ENCODE measurements at regions of chr9 and their contacts with region 1.

Region 1: DNA sequence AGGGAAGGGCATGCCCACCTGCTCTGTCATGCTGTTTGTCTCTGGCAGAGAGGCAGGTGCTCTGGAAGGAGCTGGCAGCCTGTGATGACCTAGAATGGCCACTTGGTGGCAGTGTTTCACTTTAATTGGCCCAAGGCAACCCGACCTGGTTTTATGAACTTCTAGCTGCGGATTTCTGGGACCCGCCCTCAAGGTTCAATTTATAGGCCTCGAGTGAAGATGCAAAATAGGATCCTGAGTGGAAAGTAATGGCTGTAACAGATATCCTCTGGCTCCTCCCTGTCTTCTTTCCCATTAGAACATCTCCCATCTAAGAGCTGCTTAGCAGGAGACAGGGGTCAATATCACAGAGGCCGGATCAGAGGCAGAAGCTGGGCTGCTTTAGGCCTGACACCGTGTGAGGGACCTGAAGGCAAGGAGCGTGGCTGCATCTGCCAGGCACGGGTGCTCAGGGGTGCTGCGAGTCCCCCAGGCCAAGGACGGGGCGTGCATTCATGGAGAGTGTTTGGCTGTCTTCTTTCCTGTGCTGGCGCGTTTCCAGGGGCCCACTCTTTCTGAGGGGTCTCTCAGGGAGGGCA is 56.7 kb upstream of the SLC28A3 start:
- DNase-seq: peak; percentile 9 to 37
- ATAC-seq: peak; percentile 36 to 77
- H3K4me3 ChIP-seq: no peak overlapping the region
- H3K27ac ChIP-seq: no peak overlapping the region
- H3K4me1 ChIP-seq: no peaks in the 10 kb centered on the region
- H3K27me3 ChIP-seq: no peaks in the 10 kb centered on the region
- CTCF ChIP-seq: peak; percentile 66 to 92 (median 75)
- POLR2A ChIP-seq: no peak

Region 2: DNA sequence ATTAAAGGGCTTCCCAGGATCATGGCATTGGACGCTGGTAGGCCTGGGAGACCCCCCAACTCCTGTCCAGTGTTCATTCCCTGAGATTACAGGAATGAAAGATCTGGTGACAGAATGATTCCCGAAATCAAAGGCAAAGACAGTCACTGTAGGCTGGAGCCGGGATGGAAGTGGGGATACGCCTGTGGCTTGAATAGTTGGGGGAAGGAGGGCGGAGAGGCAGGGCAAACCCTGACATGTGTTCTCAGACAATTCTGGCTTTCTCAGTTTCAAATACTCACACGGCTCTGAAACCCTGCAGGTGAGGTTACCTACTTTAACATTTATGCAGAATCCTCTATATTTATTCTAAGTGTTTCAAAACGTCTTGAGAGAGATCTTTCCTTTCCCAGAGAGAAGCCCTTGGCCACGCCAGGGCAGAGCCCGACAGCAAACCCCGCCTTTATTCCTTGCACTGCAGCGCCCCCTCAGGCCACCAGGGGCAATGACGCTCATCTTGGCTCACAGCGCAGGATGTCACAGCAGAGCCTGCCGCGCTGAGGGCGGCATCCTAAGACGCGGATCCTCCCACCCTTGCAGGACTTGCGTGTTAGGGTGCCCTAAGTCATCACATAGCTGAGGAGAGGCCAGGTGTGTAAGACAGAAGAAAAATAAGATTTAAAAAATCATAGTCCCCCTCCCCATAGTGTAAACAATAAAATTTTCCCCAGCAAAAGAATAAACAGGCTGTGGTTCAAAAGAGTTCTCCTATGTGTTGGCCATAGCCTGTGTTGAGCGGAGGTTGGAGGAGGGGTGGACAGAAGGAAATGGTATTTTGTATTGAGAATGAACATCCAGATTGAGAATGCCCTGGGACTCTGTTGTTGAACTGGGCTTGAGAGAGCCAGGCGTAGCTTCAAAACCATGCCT is 556.8 kb after region 1 on chr9:
- in situ Hi-C with region 1: loop called in 3 of 4 experiments (anchors 25 kb)
- intact Hi-C with region 1: loop called (anchors 10 kb)
- DNase-seq: peak; percentile 24 to 52
- ATAC-seq: peak; percentile 65 to 71
- H3K4me3 ChIP-seq: no peak overlapping the region
- H3K27ac ChIP-seq: no peak overlapping the region
- H3K4me1 ChIP-seq: peaks cover 0 to 3% of the 10 kb centered on the region in 2 donors
- H3K27me3 ChIP-seq: no peaks in the 10 kb centered on the region
- CTCF ChIP-seq: peak; percentile 56 to 81 (median 66)
- POLR2A ChIP-seq: no peak

Region 3: GRCh38 chr9:85600675-85601263 is 1203.5 kb after region 1 on chr9:
- in situ Hi-C with region 1: loop called (anchors 10 to 25 kb)
- intact Hi-C with region 1: no loop called
- DNase-seq: peak in 1 of 2 donors; percentile 25
- ATAC-seq: peak in 1 of 2 donors; percentile 61
- H3K4me3 ChIP-seq: no peak overlapping the region
- H3K27ac ChIP-seq: no peak overlapping the region
- H3K4me1 ChIP-seq: peaks cover 0 to 11% of the 10 kb centered on the region in 2 donors
- H3K27me3 ChIP-seq: no peaks in the 10 kb centered on the region
- CTCF ChIP-seq: no peak
- POLR2A ChIP-seq: no peak

Region 4: GRCh38 chr9:85610074-85610860 is 1213.0 kb after region 1 on chr9:
- in situ Hi-C with region 1: loop called (anchors 10 to 25 kb)
- intact Hi-C with region 1: loop called (anchors 5 kb)
- DNase-seq: no peak
- ATAC-seq: peak; percentile 80 to 90
- H3K4me3 ChIP-seq: peak overlapping the region; percentile 21 to 27 (median 24)
- H3K27ac ChIP-seq: peak overlapping the region in 2 of 4 donors; percentile 12 to 22
- H3K4me1 ChIP-seq: no peaks in the 10 kb centered on the region
- H3K27me3 ChIP-seq: no peaks in the 10 kb centered on the region
- CTCF ChIP-seq: peak; percentile 50 to 85 (median 74)
- POLR2A ChIP-seq: no peak